Sciatic nerve (tissue), 2 donors: ENCODE measurements at regions of chr12 and their contacts with region 1.

Region 1: GRCh38 chr12:107983756-107984472 is 145.2 kb upstream of the WSCD2 start:
- DNase-seq: no peak
- ATAC-seq: no peak

Region 2: DNA sequence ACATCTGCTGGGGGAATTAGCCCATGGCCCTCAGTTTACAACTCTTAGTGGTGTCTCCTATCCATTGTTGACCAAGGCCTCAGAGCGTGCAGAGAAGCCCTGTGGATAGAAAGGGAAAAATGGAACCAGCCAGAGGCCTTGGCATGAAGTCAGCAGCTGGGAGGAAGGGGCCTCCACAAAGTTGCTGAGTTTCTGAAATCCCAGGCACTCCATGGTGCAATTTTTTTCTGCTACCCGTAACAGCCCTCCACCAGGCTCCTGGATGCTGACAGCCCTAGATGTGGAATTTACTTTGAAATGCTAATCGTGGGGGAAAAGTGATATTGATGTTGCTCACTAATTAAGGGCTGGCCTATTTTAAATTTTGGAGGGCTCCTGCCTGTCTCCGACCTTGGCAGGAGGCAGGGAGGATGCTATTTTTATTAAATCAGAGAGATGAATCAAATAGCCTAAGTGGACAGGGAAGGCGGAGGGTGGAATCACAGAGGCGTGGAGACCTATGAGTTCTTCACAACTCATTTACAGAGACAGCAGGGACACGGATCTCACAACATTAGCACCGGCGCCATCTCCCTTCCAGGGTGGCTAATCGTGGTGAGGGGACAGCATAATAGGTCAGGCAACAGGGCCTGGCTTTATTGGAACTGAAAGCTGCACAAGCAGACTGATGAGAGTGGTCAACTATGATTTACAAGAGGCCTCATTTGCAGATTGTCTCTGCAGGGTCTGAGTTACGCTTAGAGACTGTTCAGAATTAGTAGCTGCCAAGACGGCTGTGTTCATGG is 45.3 kb after region 1 on chr12:
- intact Hi-C with region 1: loop called (anchors 1 kb)
- DNase-seq: no peak
- ATAC-seq: no peak